Activated naive CD8-positive, alpha-beta T cell treated with anti-CD3 and anti-CD28 coated beads, Interleukin-2, amount 10 ng/mL, durations not matched to agents 7 days and 5 days (primary cell): ENCODE measurements at regions of chr2 and their contacts with region 1.

Region 1: GRCh38 chr2:71130113-71130904 is at the starts of genes MCEE and MPHOSPH10:
- DNase-seq: peak; percentile 89
- ATAC-seq: peak; percentile 92
- H3K4me3 Mint-ChIP-seq: no peak within 1 kb of the TSS
- H3K27ac Mint-ChIP-seq: no peak within 1 kb of the TSS
- H3K4me1 Mint-ChIP-seq: peaks cover 8% of the 10 kb centered on the region
- H3K27me3 Mint-ChIP-seq: no peaks in the 10 kb centered on the region
- total RNA-seq, gene MCEE: 16.6 to 17.6 TPM
- total RNA-seq, gene MPHOSPH10: 36.0 to 37.2 TPM

Region 2: GRCh38 chr2:71068218-71069035 is 61.9 kb before region 1 on chr2 and contains the start of gene NAGK:
- POLR2A ChIA-PET with region 1: interaction called, 43 read pairs
- DNase-seq: peak; percentile 99
- ATAC-seq: peak; percentile 87
- H3K4me3 Mint-ChIP-seq: peak within 1 kb of the TSS; percentile 94
- H3K27ac Mint-ChIP-seq: peak within 1 kb of the TSS; percentile 96
- H3K4me1 Mint-ChIP-seq: peaks cover 35% of the 10 kb centered on the region
- H3K27me3 Mint-ChIP-seq: no peaks in the 10 kb centered on the region
- total RNA-seq, gene NAGK: 87.1 to 93.3 TPM

Region 3: DNA sequence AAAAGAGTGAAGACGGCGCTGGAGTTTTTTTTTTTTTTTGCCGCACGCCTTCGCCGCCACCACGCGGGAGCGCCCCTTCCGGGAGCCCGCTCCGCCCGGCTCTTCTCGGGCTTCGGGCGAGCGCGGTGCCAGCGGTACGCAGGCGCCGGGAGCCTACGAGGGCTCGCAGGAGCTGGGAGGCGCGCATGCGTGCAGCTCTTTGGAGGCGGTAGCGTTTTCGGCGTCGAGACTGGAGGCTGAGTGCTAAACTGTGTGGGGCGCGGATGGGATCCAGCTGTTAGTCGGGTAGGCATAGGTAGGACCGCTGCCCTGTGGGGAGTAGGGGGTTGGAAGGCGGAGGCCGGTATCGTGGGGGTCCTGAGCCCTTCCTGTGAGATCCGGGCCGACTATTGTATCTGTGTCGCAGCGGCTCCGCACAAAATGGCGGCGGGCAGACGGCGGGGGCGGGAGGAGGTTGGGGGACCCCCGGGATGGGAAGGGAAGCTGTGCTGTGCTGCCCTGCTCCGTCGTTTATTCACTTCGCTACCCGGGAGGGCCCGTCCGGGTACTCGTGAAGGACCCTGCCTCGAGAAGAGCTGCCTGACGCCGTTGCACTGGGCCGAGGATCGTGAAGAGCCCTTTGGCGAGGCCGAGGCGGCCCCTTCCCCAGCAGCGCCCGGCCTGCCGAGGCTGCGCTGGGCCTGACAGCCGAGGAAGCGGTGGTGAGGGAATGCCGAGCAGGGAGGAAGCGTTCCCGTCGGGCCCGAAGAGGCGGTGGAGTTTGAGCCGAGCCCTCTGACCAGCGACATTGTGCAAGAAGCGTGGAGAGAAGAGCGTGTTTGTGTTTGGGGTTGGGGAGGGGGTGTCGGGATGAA is 201.5 kb after region 1 on chr2 and contains the start of gene ZNF638:
- POLR2A ChIA-PET with region 1: interaction called, 10 read pairs
- DNase-seq: peak; percentile 95
- ATAC-seq: peak; percentile 99
- H3K4me3 Mint-ChIP-seq: peak within 1 kb of the TSS; percentile 100
- H3K27ac Mint-ChIP-seq: peak within 1 kb of the TSS; percentile 100
- H3K4me1 Mint-ChIP-seq: peaks cover 17% of the 10 kb centered on the region
- H3K27me3 Mint-ChIP-seq: peaks cover 14% of the 10 kb centered on the region
- total RNA-seq, gene ZNF638: 99.1 to 101 TPM